ENCODE measurements at regions of chr11 and their contacts with region 1.

Region 1: DNA sequence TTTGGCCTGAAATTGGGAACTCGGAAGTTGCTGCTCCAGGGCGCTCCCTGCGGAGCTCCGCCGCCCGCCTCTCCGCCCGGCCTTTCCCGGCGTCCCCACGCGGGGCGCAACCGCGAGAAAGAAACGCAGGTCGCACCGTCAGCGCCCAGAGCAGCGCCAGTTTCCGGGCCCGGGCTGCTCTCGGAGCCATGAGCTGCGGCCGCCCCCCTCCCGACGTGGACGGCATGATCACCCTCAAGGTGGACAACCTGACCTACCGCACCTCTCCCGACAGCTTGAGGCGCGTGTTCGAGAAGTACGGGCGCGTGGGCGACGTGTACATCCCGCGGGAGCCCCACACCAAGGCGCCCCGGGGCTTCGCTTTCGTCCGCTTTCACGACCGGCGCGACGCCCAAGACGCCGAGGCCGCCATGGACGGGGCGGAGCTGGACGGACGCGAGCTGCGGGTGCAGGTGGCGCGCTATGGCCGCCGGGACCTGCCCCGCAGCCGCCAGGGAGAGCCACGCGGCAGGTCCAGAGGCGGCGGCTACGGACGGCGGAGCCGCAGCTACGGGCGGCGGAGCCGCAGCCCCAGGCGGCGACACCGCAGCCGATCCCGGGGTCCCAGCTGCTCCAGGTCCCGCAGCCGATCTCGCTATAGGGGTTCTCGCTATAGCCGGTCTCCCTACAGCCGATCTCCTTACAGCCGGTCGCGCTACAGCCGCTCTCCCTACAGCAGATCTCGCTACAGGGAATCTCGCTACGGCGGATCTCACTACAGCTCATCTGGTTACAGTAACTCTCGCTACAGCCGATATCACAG is 521 bp downstream of the SRSF8 start:
- DNase-seq: peak; percentile 67 to 86
- ATAC-seq: peak; percentile 72 to 82 (median 74)
- H3K4me3 ChIP-seq: peak overlapping the region; percentile 74
- H3K4me3 Mint-ChIP-seq: peak overlapping the region; percentile 99
- H3K27ac ChIP-seq: peak overlapping the region; percentile 87
- H3K27ac Mint-ChIP-seq: peak overlapping the region; percentile 97 to 99
- H3K4me1 ChIP-seq: peaks cover 6% of the 10 kb centered on the region
- H3K4me1 Mint-ChIP-seq: peaks cover 36 to 38% of the 10 kb centered on the region in 2 donors
- H3K27me3 ChIP-seq: no peaks in the 10 kb centered on the region
- H3K27me3 Mint-ChIP-seq: peaks cover 0 to 5% of the 10 kb centered on the region in 2 donors
- CTCF ChIP-seq: no peak

Region 2: GRCh38 chr11:94973099-94973968 is 93.9 kb before region 1 on chr11 and contains the starts of genes CWC15 and KDM4D:
- intact Hi-C with region 1: loop called (anchors 1 kb)
- DNase-seq: peak; percentile 88 to 97
- ATAC-seq: peak; percentile 98 to 100 (median 99)
- H3K4me3 ChIP-seq: peak within 1 kb of the TSS; percentile 68
- H3K4me3 Mint-ChIP-seq: peak within 1 kb of the TSS; percentile 99
- H3K27ac ChIP-seq: peak within 1 kb of the TSS; percentile 71
- H3K27ac Mint-ChIP-seq: peak within 1 kb of the TSS; percentile 91 to 98
- H3K4me1 ChIP-seq: peaks cover 4% of the 10 kb centered on the region
- H3K4me1 Mint-ChIP-seq: peaks cover 25 to 35% of the 10 kb centered on the region in 2 donors
- H3K27me3 ChIP-seq: no peaks in the 10 kb centered on the region
- H3K27me3 Mint-ChIP-seq: peaks cover 15 to 17% of the 10 kb centered on the region in 2 donors
- CTCF ChIP-seq: no peak
- total RNA-seq, gene CWC15: 76.8 to 90.7 (median 81.3) TPM
- total RNA-seq, gene KDM4D: 0.14 to 0.32 TPM in 2 of 3 donors, not detected in the other

Region 3: DNA sequence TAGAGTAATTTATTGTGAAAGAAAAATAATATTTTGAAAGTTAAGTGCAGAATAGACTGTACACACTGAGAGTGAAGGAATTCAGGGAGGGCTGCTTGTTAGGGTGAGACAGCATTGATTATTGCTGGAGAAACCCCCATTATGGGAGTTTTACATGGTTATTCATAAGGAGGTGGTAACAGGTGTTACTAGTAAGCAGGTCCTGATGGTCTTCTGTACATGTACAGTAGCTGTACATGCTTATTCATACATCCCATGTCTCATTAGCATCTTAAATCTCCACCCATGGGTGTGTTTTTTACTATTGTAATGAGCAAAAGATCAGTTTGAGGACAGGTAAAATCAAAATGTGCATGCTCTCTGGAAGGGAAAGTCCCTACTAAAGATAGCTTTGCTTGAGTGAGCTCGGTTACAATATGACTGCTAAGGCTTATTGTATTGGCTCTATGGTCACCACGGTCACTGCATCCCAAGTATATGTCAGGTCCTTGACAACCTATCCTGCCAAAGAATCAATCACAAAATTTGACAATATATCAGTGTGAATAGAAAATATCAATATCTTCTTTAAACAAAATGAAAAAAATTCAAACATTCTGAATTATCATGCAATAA is 11.8 kb before region 1 on chr11:
- intact Hi-C with region 1: no loop called
- DNase-seq: no peak
- ATAC-seq: no peak
- H3K4me3 ChIP-seq: no peak overlapping the region
- H3K4me3 Mint-ChIP-seq: no peak overlapping the region
- H3K27ac ChIP-seq: no peak overlapping the region
- H3K27ac Mint-ChIP-seq: no peak overlapping the region
- H3K4me1 ChIP-seq: no peaks in the 10 kb centered on the region
- H3K4me1 Mint-ChIP-seq: no peaks in the 10 kb centered on the region
- H3K27me3 ChIP-seq: peaks cover 3% of the 10 kb centered on the region
- H3K27me3 Mint-ChIP-seq: peaks cover 22 to 52% of the 10 kb centered on the region in 2 donors
- CTCF ChIP-seq: no peak

Region 4: GRCh38 chr11:95089620-95090542 is 22.6 kb after region 1 on chr11 and contains the start of gene ENDOD1:
- intact Hi-C with region 1: loop called (anchors 1 kb)
- DNase-seq: peak; percentile 78 to 92
- ATAC-seq: peak; percentile 93 to 98 (median 93)
- H3K4me3 ChIP-seq: peak within 1 kb of the TSS; percentile 83
- H3K4me3 Mint-ChIP-seq: peak within 1 kb of the TSS; percentile 95
- H3K27ac ChIP-seq: peak within 1 kb of the TSS; percentile 86
- H3K27ac Mint-ChIP-seq: peak within 1 kb of the TSS; percentile 94 to 97
- H3K4me1 ChIP-seq: peaks cover 21% of the 10 kb centered on the region
- H3K4me1 Mint-ChIP-seq: peaks cover 40 to 44% of the 10 kb centered on the region in 2 donors
- H3K27me3 ChIP-seq: no peaks in the 10 kb centered on the region
- H3K27me3 Mint-ChIP-seq: peaks cover 0 to 1% of the 10 kb centered on the region in 2 donors
- CTCF ChIP-seq: no peak
- total RNA-seq, gene ENDOD1: 10.1 to 15.5 (median 14.0) TPM

Region 5: GRCh38 chr11:95705485-95706124 is 638.4 kb after region 1 on chr11:
- intact Hi-C with region 1: loop called (anchors 1 kb)
- DNase-seq: peak; percentile 57 to 93
- ATAC-seq: peak; percentile 89 to 94 (median 92)
- H3K4me3 ChIP-seq: no peak overlapping the region
- H3K4me3 Mint-ChIP-seq: no peak overlapping the region
- H3K27ac ChIP-seq: no peak overlapping the region
- H3K27ac Mint-ChIP-seq: no peak overlapping the region
- H3K4me1 ChIP-seq: peaks cover 3% of the 10 kb centered on the region
- H3K4me1 Mint-ChIP-seq: peaks cover 0 to 6% of the 10 kb centered on the region in 2 donors
- H3K27me3 ChIP-seq: no peaks in the 10 kb centered on the region
- H3K27me3 Mint-ChIP-seq: peaks cover 6 to 7% of the 10 kb centered on the region in 2 donors
- CTCF ChIP-seq: peak; percentile 83

Region 6: GRCh38 chr11:95764267-95764898 is 697.1 kb after region 1 on chr11:
- intact Hi-C with region 1: loop called (anchors 1 kb)
- DNase-seq: peak in 1 of 2 donors; percentile 76
- ATAC-seq: peak; percentile 74 to 90 (median 77)
- H3K4me3 ChIP-seq: no peak overlapping the region
- H3K4me3 Mint-ChIP-seq: no peak overlapping the region
- H3K27ac ChIP-seq: no peak overlapping the region
- H3K27ac Mint-ChIP-seq: no peak overlapping the region
- H3K4me1 ChIP-seq: no peaks in the 10 kb centered on the region
- H3K4me1 Mint-ChIP-seq: no peaks in the 10 kb centered on the region
- H3K27me3 ChIP-seq: no peaks in the 10 kb centered on the region
- H3K27me3 Mint-ChIP-seq: peaks cover 8 to 30% of the 10 kb centered on the region in 2 donors
- CTCF ChIP-seq: peak; percentile 80

Measured in natural killer cell (primary cell).